Endothelial cell of umbilical vein (primary cell): ENCODE measurements at regions of chr11 and their contacts with region 1.

Region 1: DNA sequence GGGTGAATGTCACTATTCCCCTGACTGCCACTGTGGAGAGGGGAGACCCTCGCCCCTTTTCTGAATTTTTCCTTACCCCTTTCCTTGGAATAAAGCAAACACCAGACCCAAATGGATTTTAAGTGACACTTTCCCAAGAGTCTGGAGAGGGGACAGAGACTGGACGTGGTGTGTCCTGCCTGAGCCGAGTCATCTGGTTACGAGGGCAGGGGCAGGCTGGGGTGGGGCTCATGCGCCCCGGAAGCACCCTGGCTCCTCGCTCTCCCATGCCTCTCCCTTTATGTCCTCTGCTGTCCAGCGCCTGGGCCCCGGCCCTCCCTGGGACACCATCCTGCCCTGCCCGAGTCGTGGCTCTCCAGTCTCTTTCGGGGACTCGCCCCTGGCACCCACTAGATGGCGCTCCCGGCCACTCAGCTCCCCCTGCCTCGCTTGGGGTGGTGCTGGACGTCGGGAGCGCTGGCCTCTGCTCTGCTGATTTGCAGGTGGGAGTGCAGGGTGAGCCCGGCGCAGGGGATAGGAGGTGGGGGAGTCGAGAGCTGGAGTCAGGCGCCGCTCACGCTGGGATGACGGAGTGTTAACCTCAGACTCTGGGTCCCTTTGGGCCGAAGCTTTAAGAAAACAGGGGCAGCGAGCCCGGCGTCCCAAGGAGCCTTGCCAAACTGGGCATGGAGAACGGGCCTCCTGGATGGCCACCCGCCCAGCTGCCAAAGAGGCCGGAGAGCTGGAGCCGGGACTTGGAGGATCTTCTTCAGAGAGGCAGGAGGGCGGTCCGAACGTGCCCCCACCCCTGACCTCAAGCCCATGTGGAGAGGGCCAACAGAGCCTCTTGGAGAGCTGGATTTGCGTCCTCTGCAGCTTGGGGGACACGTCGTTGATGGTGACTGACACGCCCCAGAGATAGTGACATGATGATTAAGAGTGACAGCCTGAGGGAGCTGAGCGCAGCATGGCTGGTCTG is 89.9 kb downstream of the RPS6KA4 start:
- DNase-seq: peak; percentile 55
- H3K4me3 ChIP-seq: no peak overlapping the region
- H3K27ac ChIP-seq: no peak overlapping the region
- H3K4me1 ChIP-seq: peaks cover 2% of the 10 kb centered on the region
- H3K27me3 ChIP-seq: peaks cover 7% of the 10 kb centered on the region in 2 experiments
- CTCF ChIP-seq: peak; percentile 83 to 95
- POLR2A ChIP-seq: no peak

Region 2: DNA sequence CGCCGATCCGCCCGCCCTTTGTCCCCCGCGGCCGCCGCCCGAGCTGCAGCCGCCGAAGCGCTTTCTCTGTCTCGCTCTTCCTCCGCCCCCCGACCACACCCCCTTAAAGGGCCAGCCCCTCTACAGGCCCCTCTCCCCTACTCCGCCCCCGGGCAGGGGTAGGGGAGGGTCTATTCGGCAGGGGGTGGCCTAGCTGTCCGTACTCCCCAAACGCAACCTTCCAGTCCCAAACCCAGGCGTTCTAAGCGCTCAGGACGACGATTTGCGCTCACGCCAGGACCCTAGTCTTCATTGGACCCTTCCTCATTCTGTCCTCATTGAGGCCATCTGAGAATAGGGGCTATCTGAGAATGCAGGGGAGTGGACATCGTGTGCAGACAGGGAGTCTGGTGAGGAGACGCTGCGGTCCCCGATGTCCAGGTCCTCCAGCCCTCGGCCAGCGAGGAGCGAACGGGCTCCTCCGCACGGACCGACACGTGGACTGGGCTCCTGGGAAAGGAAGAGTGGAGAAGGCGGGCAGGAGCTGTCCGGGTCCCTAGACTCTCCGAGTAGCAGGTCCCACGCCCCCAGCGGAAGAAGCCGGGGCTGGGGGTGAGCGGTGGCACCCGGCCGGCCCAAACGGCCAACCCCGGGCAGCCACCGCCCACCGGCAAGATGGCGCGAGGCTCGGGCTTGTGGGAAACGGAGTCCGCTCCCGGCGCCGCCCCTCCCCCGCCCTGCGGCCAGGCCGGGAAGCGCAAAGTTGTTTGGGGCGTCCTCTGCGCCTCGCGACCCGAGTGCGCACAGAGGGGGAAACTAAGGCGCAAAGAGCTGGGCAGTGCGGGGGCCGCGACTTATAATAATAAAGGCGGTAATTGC is 201.8 kb before region 1 on chr11 and contains the start of gene PPP1R14B:
- CTCF ChIA-PET with region 1: no interaction called
- POLR2A ChIA-PET with region 1: no interaction called
- dilution Hi-C with region 1: no loop called
- intact Hi-C with region 1: no loop called
- DNase-seq: peak; percentile 80
- H3K4me3 ChIP-seq: peak within 1 kb of the TSS; percentile 67 to 78 (median 75)
- H3K27ac ChIP-seq: peak within 1 kb of the TSS; percentile 47
- H3K4me1 ChIP-seq: peaks cover 28% of the 10 kb centered on the region
- H3K27me3 ChIP-seq: no peaks in the 10 kb centered on the region
- CTCF ChIP-seq: no peak
- POLR2A ChIP-seq: peak; percentile 14
- total RNA-seq, gene PPP1R14B: 431 TPM in 2 replicates

Region 3: GRCh38 chr11:64430629-64431028 is 18.2 kb before region 1 on chr11:
- CTCF ChIA-PET with region 1: interaction called, 44 read pairs
- POLR2A ChIA-PET with region 1: no interaction called
- dilution Hi-C with region 1: no loop called
- intact Hi-C with region 1: no loop called
- DNase-seq: no peak
- H3K4me3 ChIP-seq: no peak overlapping the region
- H3K27ac ChIP-seq: no peak overlapping the region
- H3K4me1 ChIP-seq: no peaks in the 10 kb centered on the region
- H3K27me3 ChIP-seq: peaks cover 4% of the 10 kb centered on the region in 2 experiments
- CTCF ChIP-seq: no peak
- POLR2A ChIP-seq: no peak

Region 4: DNA sequence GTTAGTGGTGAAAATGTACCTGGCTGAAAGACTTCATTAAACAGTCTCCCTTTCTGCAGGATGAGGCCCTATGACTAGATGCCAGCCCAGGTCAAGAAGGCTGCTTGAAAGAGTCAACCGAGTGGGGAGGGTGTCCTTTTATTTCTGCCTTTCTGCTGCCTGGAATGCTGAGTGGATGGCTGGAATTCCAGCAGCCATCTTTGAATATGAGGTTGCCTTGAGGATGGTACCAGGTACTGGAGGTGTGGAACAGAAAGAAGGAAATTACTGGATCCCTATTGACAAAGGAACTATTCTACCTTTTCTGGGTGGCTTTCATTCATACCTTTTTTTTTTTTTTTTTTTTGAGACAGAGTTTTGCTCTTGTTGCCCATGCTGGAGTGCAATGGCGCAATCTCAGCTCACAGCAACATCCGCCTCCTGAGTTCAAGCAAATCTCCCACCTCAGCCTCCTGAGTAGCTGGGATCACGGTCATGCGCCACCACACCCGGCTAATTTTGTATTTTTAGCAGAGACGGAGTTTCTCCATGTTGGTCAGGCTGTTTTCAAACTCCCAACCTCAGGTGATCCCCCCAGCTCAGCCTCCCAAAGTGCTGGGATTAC is 17.3 kb after region 1 on chr11:
- CTCF ChIA-PET with region 1: interaction called, 13 read pairs
- POLR2A ChIA-PET with region 1: no interaction called
- dilution Hi-C with region 1: no loop called
- intact Hi-C with region 1: no loop called
- DNase-seq: no peak
- H3K4me3 ChIP-seq: no peak overlapping the region
- H3K27ac ChIP-seq: no peak overlapping the region
- H3K4me1 ChIP-seq: no peaks in the 10 kb centered on the region
- H3K27me3 ChIP-seq: peaks cover 2 to 5% of the 10 kb centered on the region in 2 experiments
- CTCF ChIP-seq: no peak
- POLR2A ChIP-seq: no peak

Region 5: DNA sequence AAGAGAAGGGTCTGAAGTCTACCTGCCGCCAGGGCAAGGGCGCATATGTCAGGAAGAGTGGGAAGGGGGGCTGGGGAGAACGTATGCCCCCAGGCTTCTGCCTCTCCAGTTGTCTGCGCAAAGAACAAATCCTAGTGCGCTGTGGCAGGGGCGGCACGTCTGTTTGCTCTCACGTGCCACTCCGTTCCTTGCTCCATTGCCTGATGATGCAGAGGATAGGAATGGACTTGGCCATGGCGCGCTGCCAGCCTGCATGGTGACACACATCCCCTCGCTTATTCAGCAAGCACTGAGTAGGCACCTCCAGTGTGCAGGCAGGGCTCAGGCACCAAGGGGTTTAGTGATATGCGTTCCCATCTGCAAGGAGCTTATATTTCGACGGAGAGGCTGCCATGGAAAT is 96.7 kb after region 1 on chr11:
- CTCF ChIA-PET with region 1: interaction called, 10 read pairs
- POLR2A ChIA-PET with region 1: no interaction called
- dilution Hi-C with region 1: no loop called
- intact Hi-C with region 1: no loop called
- DNase-seq: peak; percentile 72
- H3K4me3 ChIP-seq: no peak overlapping the region
- H3K27ac ChIP-seq: no peak overlapping the region
- H3K4me1 ChIP-seq: peaks cover 10% of the 10 kb centered on the region
- H3K27me3 ChIP-seq: no peaks in the 10 kb centered on the region
- CTCF ChIP-seq: no peak
- POLR2A ChIP-seq: no peak

Region 6: GRCh38 chr11:64703048-64703447 is 254.2 kb after region 1 on chr11:
- CTCF ChIA-PET with region 1: interaction called, 10 read pairs
- POLR2A ChIA-PET with region 1: no interaction called
- dilution Hi-C with region 1: no loop called
- intact Hi-C with region 1: no loop called
- DNase-seq: no peak
- H3K4me3 ChIP-seq: no peak overlapping the region
- H3K27ac ChIP-seq: no peak overlapping the region
- H3K4me1 ChIP-seq: no peaks in the 10 kb centered on the region
- H3K27me3 ChIP-seq: peaks cover 14 to 23% of the 10 kb centered on the region in 2 experiments
- CTCF ChIP-seq: no peak
- POLR2A ChIP-seq: no peak

Region 7: DNA sequence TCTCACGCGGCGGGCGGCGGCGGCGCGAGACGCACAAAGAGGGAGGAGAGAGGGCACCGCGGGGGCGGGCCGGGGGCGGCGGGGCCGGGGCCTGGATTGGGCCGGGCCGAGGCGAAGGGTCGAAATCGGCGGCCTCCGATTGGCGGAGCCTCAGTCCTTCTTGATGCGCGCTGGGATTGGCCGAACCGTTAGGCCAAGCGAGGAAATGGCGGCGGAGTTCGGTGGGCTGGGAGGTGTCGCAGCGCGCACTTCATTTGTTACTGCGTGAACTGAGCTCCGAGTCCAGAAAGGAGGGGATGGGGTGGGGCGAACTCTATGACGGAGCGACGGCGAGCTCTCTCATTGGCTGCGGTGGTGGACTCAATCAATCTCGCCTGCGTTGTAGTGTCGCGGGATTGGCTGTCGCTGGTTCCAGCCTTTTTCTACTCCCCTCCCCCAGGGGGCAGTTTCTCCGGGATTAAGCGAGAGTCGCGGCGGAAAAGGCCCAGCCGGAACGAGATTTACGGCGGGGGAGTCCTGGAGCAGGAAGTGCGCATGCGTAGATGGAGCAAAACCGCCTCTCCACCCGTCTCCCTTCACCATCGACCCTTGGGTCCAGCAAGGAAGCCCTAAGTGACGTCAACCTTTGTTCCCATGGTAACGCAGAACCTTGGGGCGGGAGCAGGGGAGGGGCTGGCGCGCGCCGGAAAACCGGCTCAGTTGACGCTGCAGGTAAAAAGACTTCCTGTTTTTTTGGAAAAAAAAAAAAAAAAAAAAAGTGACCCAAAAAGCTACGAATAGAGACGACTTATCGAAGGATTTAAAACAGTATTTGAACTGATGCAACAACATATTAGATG is 329.8 kb after region 1 on chr11 and contains the start of gene SF1:
- CTCF ChIA-PET with region 1: no interaction called
- POLR2A ChIA-PET with region 1: no interaction called
- dilution Hi-C with region 1: no loop called
- intact Hi-C with region 1: no loop called
- DNase-seq: peak; percentile 100
- H3K4me3 ChIP-seq: peak within 1 kb of the TSS; percentile 69 to 85 (median 75)
- H3K27ac ChIP-seq: peak within 1 kb of the TSS; percentile 80
- H3K4me1 ChIP-seq: peaks cover 22% of the 10 kb centered on the region
- H3K27me3 ChIP-seq: no peaks in the 10 kb centered on the region
- CTCF ChIP-seq: no peak
- POLR2A ChIP-seq: peak; percentile 72
- total RNA-seq, gene SF1: 322 and 342 TPM in 2 replicates

Region 8: DNA sequence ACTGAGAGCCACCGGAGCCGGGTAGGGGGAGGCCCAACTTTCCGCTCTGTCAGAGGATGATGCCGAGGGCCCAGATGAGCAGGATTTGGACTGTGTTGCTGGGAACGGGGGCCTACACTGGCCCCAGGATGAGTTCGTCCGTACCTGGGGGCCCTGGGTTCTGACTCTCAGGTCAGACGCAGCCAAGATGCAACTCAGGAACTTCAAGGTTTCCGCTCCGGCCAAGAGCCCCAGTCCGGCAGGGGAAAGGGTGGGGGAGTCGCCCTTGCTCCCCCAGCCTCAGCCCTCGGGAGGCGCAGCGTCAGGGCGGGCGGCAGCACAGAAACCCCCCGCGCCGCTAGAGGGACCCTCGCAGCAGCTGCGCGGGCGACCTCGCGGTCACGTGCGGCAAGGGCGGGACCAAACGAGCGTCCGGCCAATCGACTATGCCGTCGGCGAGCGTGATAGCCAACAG is 564.8 kb after region 1 on chr11:
- CTCF ChIA-PET with region 1: no interaction called
- POLR2A ChIA-PET with region 1: no interaction called
- dilution Hi-C with region 1: no loop called
- intact Hi-C with region 1: no loop called
- DNase-seq: peak; percentile 92
- H3K4me3 ChIP-seq: peak overlapping the region; percentile 32 to 84 (median 59)
- H3K27ac ChIP-seq: peak overlapping the region; percentile 87
- H3K4me1 ChIP-seq: peaks cover 4% of the 10 kb centered on the region
- H3K27me3 ChIP-seq: no peaks in the 10 kb centered on the region
- CTCF ChIP-seq: peak in 1 of 2 donors; percentile 56
- POLR2A ChIP-seq: no peak